AG04450 (cell line): ENCODE measurements at regions of chr1 and their contacts with region 1.

Region 1: DNA sequence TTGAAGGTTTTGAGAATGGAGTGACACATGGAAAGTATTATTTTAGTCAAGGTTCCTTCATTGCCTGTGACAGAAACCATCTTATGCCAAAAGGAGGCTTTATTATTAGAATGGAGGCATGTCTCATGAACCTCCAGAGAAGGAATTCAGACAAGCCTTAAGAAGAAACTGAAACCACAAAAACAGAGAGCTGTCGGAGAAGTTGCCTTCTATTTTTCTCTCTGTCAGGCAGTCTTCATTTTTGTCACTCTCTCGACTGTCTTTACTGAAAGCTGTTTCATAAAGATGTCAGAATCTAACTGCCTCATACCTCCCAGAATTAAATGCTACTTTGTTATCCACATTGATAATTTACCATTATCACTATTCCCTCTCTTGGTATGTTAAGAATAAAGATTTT is 434.7 kb upstream of the ADGRL4 start:
- DNase-seq: no peak
- H3K4me3 ChIP-seq: no peak overlapping the region
- H3K27ac ChIP-seq: no peak overlapping the region
- H3K27me3 ChIP-seq: no peaks in the 10 kb centered on the region
- CTCF ChIP-seq: no peak

Region 2: DNA sequence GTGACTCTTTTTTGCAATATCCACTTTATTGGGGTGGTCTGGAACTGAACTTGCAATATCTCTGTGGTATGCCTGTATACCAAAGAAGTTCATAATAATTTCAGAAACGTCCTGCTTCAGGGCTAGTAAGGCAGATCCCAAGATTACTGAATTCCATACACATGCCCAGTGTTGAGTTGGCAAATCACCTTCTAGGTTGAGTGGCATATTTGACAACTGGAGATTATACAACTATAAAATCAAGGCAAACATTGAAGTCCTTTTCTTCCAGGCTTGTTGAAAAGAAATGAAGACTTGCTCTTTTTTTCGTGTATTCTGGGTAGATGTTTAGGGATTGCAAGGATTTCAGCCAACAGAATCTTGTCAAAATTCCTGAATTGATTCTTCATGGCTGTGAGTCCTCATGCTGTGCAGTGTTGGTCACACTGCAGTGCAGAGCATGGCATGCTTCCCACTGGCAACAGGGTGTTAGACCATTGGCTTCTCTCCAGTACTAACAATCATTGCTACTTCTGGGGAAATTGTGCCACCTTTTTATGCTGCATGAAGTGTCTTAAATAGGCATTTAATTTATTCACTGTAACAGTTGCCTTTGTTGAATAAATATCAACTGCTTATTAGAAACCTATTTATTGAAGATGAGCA is 67.6 kb before region 1 on chr1:
- CTCF ChIA-PET with region 1: no interaction called
- POLR2A ChIA-PET with region 1: no interaction called
- DNase-seq: no peak
- H3K4me3 ChIP-seq: no peak overlapping the region
- H3K27ac ChIP-seq: no peak overlapping the region
- H3K27me3 ChIP-seq: no peaks in the 10 kb centered on the region
- CTCF ChIP-seq: no peak

Region 3: GRCh38 chr1:79422726-79423125 is 18.5 kb before region 1 on chr1:
- CTCF ChIA-PET with region 1: no interaction called
- POLR2A ChIA-PET with region 1: no interaction called
- DNase-seq: no peak
- H3K4me3 ChIP-seq: no peak overlapping the region
- H3K27ac ChIP-seq: no peak overlapping the region
- H3K27me3 ChIP-seq: no peaks in the 10 kb centered on the region
- CTCF ChIP-seq: no peak

Region 4: DNA sequence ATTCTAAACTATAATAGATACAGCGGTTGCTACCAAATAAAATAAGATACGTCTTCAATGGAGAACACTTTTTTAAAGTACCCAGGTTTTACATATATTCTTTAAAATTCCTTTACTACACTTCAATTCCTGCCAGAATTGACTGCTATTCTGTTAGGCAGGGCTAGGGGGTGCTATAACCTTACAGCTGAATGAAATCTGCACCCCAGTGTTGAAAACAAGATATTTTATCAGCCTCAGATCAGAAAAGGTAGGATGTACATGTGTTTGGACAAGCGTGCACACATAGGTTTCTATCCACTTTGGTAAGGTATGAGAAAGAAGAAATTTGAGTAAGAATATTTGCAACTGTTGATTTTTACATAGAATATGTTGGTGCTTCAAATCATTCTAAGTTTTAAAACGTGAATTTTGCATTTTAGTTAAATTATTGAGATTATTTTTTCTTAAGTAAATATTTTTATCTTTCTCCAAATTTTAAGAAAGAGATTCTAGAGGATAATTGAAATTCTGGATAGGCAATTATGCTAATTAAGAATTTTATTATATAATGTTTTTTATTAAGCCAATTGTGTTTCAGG is 56.0 kb after region 1 on chr1:
- CTCF ChIA-PET with region 1: interaction called, 13 read pairs
- POLR2A ChIA-PET with region 1: no interaction called
- DNase-seq: peak; percentile 13
- H3K4me3 ChIP-seq: no peak overlapping the region
- H3K27ac ChIP-seq: no peak overlapping the region
- H3K27me3 ChIP-seq: no peaks in the 10 kb centered on the region
- CTCF ChIP-seq: peak; percentile 99

Region 5: GRCh38 chr1:80218112-80218511 is 776.9 kb after region 1 on chr1:
- CTCF ChIA-PET with region 1: interaction called, 14 read pairs
- POLR2A ChIA-PET with region 1: no interaction called
- DNase-seq: peak; percentile 11
- H3K4me3 ChIP-seq: no peak overlapping the region
- H3K27ac ChIP-seq: no peak overlapping the region
- H3K27me3 ChIP-seq: no peaks in the 10 kb centered on the region
- CTCF ChIP-seq: peak; percentile 77